ENCODE measurements at regions of chr18 and their contacts with region 1.

Region 1: DNA sequence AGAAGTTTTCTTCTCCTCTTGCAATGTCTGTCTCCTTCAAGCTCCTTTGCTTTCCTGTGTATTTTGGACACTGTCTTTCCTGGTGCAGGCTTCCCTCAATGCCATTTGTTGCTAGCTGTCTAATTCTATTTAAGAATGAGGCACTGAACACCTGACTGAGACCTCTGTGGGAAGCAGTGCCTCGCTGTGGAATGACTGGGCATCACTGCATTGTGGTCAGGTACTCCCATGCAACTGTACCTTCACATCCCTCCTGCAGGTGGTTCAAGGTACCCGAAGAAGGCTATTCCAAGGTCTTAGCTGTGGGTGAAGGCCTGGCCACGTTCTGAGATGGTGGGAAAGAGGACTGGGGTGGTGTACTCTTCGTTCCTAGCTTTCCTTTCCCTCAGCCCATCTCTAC is 152.8 kb upstream of the CTAGE1 start:
- DNase-seq: no peak
- H3K4me3 ChIP-seq: no peak overlapping the region
- H3K27ac ChIP-seq: no peak overlapping the region
- H3K4me1 ChIP-seq: no peaks in the 10 kb centered on the region
- H3K27me3 ChIP-seq: peaks cover 0 to 34% (median 0%) of the 10 kb centered on the region in 4 donors
- CTCF ChIP-seq: no peak
- POLR2A ChIP-seq: no peak

Region 2: GRCh38 chr18:22314420-22314819 is 256.1 kb before region 1 on chr18:
- intact Hi-C with region 1: loop called (anchors 5 kb)
- DNase-seq: no peak
- H3K4me3 ChIP-seq: no peak overlapping the region
- H3K27ac ChIP-seq: no peak overlapping the region
- H3K4me1 ChIP-seq: no peaks in the 10 kb centered on the region
- H3K27me3 ChIP-seq: peaks cover 0 to 3% (median 0%) of the 10 kb centered on the region in 4 donors
- CTCF ChIP-seq: no peak
- POLR2A ChIP-seq: no peak

Region 3: DNA sequence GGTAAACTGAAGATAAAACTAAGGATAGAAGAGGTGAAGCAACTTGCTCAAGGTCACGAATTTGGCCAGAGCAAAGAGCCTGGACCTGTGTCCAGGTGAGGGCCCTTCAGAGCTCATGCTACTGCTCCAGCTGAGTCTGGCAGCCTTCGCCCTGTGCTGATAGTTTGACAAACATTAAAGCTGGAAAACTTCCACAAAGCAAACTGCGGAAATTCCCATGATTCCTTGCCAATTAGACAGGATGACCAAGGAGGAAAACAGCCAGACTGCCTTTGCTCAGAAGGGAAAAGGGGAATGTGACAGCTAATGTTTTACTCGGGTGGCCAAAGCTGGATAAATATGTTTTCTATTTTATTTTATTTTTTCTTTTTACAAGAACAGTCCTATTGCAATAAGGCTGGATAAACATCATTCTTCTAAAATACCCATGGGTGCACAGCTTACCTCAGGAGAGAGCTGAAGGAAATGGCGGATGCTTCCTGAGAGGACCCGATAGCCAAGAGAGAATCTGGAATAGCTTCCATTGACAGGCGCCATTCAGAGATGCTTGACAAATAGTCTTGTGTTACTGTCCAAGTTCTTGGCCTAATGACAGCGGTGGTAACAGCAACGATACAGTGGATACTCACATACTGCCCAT is 147.5 kb before region 1 on chr18:
- intact Hi-C with region 1: no loop called
- DNase-seq: no peak
- H3K4me3 ChIP-seq: no peak overlapping the region
- H3K27ac ChIP-seq: no peak overlapping the region
- H3K4me1 ChIP-seq: peaks cover 0 to 6% (median 0%) of the 10 kb centered on the region in 3 donors
- H3K27me3 ChIP-seq: peaks cover 0 to 8% (median 0%) of the 10 kb centered on the region in 4 donors
- CTCF ChIP-seq: no peak
- POLR2A ChIP-seq: no peak

Region 4: GRCh38 chr18:22465859-22466457 is 104.5 kb before region 1 on chr18:
- intact Hi-C with region 1: no loop called
- DNase-seq: no peak
- H3K4me3 ChIP-seq: no peak overlapping the region
- H3K27ac ChIP-seq: peak overlapping the region in 3 of 4 donors; percentile 0 to 40 (median 10)
- H3K4me1 ChIP-seq: peaks cover 5 to 31% (median 22%) of the 10 kb centered on the region in 3 donors
- H3K27me3 ChIP-seq: no peaks in the 10 kb centered on the region
- CTCF ChIP-seq: no peak
- POLR2A ChIP-seq: no peak